IMR-90 (cell line): ENCODE measurements at regions of chr13 and their contacts with region 1.

Region 1: DNA sequence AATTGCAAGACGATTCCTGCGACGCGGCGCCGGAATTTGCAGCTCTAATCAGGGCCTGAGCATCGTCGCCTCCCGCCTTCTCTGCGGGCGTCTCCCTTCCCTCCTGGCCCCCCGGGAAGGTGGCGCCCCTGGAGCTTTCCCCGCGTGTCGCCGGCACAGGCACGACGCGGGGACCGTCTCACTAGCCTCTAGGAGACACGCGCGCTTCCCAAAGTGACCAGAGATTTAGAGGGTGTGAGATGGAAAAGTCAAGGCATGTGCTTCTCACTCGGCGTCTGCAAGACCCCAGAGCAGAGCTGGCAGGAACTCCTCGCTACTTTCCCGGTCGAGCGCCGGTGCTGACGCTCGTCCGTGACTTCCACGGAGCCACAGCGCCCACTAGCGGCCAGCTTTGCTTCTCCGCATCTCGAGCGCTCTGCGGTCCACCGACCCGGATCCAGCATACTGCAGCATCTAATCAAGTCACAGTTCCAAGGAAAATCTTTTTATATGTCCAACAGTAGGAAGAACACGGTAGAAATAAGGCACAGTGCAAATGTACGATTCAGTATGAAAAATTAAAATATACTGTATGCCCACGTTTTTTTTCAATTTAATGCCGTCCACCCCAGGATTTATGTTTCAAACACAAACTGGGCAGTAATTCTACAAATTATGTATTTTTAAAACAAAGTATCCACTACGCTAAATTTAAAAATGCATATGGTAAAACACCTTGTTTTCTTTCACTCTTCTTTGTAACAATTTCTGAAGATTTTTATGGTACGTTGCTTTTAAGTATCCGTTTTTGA is 977 bp upstream of the EFNB2 start:
- DNase-seq: peak; percentile 83
- ATAC-seq: peak; percentile 22
- H3K4me3 ChIP-seq: peak overlapping the region; percentile 47
- H3K27ac ChIP-seq: no peak overlapping the region
- H3K4me1 ChIP-seq: peaks cover 4% of the 10 kb centered on the region; the same call in 1 of the 2 replicates
- H3K27me3 ChIP-seq: no peaks in the 10 kb centered on the region
- CTCF ChIP-seq: peak; percentile 96
- POLR2A ChIP-seq: no peak
- RAD21 ChIP-seq: peak; percentile 93

Region 2: GRCh38 chr13:105139380-105140285 is 1396.8 kb before region 1 on chr13:
- CTCF ChIA-PET with region 1: no interaction called
- POLR2A ChIA-PET with region 1: no interaction called
- dilution Hi-C with region 1: no loop called
- in situ Hi-C with region 1: no loop called
- intact Hi-C with region 1: loop called (anchors 5 kb)
- DNase-seq: peak; percentile 62
- ATAC-seq: peak; percentile 93
- H3K4me3 ChIP-seq: peak overlapping the region; percentile 91
- H3K27ac ChIP-seq: peak overlapping the region; percentile 68; the same call in 1 of the 2 replicates
- H3K4me1 ChIP-seq: no peaks in the 10 kb centered on the region
- H3K27me3 ChIP-seq: no peaks in the 10 kb centered on the region
- CTCF ChIP-seq: peak; percentile 24; the same call in 1 of the 2 replicates
- POLR2A ChIP-seq: no peak
- RAD21 ChIP-seq: no peak

Region 3: DNA sequence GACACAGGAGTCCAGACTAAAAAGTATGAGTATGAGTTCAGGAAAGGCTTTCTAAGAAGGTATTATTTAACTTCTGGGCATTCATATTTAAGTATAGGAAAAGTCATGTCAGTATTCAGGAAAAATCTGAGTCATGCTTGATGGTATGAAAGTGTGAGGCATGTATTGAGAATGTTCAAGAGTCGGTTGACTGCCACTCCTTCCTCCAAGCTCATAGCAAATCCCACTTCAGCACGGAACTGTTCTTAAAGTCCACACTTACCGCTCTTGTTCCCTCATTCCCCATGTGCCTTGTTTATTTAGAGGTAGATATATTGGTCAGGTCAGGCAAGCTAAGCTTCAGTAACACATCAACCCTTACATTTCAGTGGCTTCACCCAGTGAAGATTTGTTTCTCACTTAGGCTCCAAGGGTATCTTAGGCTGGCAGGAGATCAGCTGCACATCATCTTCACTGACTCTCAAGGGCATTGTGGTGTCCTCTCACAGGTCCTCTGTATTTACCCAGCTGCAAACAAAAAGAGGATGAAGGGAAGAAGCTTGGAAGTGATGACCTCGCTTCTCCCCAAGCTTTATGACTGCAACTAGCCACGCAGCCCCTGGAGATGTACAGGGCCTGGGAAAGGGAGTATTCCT is 1190.2 kb before region 1 on chr13:
- CTCF ChIA-PET with region 1: no interaction called
- POLR2A ChIA-PET with region 1: no interaction called
- dilution Hi-C with region 1: no loop called
- in situ Hi-C with region 1: loop called (anchors 25 kb)
- intact Hi-C with region 1: no loop called
- DNase-seq: peak; percentile 90
- ATAC-seq: peak; percentile 95
- H3K4me3 ChIP-seq: no peak overlapping the region
- H3K27ac ChIP-seq: peak overlapping the region; percentile 15; the same call in 1 of the 2 replicates
- H3K4me1 ChIP-seq: peaks cover 6% of the 10 kb centered on the region
- H3K27me3 ChIP-seq: no peaks in the 10 kb centered on the region
- CTCF ChIP-seq: no peak
- POLR2A ChIP-seq: no peak
- RAD21 ChIP-seq: no peak

Region 4: GRCh38 chr13:106156468-106156867 is 380.0 kb before region 1 on chr13:
- CTCF ChIA-PET with region 1: no interaction called
- POLR2A ChIA-PET with region 1: no interaction called
- dilution Hi-C with region 1: no loop called
- in situ Hi-C with region 1: no loop called
- intact Hi-C with region 1: loop called (anchors 1 kb)
- DNase-seq: peak; percentile 99
- ATAC-seq: peak; percentile 89
- H3K4me3 ChIP-seq: no peak overlapping the region
- H3K27ac ChIP-seq: peak overlapping the region; percentile 61
- H3K4me1 ChIP-seq: peaks cover 7% of the 10 kb centered on the region
- H3K27me3 ChIP-seq: no peaks in the 10 kb centered on the region
- CTCF ChIP-seq: no peak
- POLR2A ChIP-seq: peak; percentile 72; the same call in 1 of the 2 replicates
- RAD21 ChIP-seq: no peak

Region 5: DNA sequence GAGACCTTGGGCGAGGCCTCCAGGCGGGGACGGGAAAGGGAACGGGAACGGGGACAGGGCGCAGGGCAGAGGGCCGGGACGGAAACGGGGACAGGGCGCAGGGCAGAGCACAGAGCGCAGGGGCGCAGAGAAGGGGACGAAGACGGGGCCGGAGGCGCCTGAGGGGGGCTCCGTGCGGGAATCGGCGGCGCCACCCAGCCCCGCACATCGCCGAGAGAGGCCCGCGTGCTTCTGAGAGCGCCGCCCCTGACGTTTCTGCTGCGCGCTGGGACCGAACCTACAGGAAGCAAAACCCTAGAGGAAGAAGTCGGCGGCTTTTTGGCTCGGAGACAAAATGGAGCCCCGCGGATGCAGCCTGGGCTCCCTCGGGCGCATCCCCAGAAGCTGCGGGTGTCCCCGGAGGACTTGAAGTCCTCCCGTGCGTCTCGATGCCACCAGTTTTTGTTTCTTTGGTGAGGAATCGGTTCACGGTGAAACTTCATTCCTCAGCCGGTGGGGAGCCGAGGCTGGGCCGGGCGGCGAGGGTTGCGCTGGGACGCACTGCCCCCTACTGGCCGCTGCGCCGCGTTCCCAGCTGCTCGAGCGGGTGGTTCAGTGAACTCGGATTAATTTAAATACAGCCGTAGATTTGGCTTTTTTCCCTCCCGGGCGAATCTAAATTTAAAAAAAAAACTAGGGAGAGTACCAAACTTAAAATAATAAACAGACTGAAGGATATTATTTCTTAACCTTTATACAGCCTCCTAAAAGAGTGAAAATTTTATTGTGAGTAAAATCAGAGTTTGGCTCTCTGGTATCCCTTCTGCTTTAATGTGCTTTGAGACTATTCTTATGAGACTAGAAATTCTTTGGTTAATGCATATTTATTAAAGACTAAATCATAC is 381.5 kb after region 1 on chr13:
- CTCF ChIA-PET with region 1: no interaction called
- POLR2A ChIA-PET with region 1: no interaction called
- dilution Hi-C with region 1: no loop called
- in situ Hi-C with region 1: no loop called
- intact Hi-C with region 1: loop called (anchors 2 kb)
- DNase-seq: peak; percentile 61
- ATAC-seq: peak; percentile 98
- H3K4me3 ChIP-seq: peak overlapping the region; percentile 70
- H3K27ac ChIP-seq: peak overlapping the region; percentile 36; the same call in 1 of the 2 replicates
- H3K4me1 ChIP-seq: no peaks in the 10 kb centered on the region
- H3K27me3 ChIP-seq: no peaks in the 10 kb centered on the region; the same call in none of the 2 replicates
- CTCF ChIP-seq: peak; percentile 94
- POLR2A ChIP-seq: no peak
- RAD21 ChIP-seq: peak; percentile 73